Activated CD4-positive, alpha-beta memory T cell treated with anti-CD3 and anti-CD28 coated beads for 36 hours (primary cell): ENCODE measurements at regions of chr2 and their contacts with region 1.

Region 1: GRCh38 chr2:88880441-88880953 is 189.0 kb downstream of the RPIA start:
- DNase-seq: peak; percentile 34
- H3K4me3 Mint-ChIP-seq: no peak overlapping the region
- H3K27ac Mint-ChIP-seq: no peak overlapping the region
- H3K4me1 Mint-ChIP-seq: no peaks in the 10 kb centered on the region
- H3K27me3 Mint-ChIP-seq: peaks cover 14% of the 10 kb centered on the region

Region 2: DNA sequence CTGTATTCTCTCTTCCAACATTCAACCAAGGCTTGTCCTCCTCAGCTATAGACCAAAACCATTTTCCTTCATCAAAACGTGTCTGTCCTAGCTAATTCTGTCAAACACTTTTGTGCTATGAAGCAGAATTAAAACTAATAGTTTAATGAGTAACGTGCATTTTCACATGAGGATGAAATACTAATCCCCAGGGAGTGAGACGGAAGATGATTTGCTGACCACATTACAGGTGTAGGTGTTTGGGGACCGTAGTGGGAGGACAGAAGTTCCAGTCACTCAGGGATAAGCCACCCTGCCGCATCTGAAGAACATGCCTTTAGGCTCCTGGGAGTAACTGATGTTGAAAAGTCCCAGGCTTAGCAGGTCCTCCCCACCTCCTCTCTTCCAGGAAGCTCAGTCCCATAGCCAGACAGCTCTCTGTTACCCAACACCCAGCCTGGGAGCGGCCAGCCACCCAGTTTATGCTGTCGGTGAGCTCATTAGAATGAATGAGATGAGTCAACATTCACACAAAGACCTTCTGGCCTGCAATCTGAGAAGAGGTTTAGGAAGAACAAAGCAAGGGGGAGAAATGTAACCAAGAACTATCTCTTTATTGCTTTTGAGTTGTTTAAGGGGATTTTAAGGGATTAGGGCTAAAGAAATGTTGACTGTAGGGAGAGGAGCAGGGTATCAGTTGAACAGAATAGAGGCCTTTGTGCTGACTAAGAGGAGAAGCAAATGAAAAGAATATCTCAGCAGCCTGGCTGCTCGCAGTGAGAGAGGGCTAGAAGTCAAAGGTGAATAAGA is 550.5 kb before region 1 on chr2:
- CTCF ChIA-PET with region 1: no interaction called
- POLR2A ChIA-PET with region 1: no interaction called
- intact Hi-C with region 1: no loop called
- DNase-seq: no peak
- H3K4me3 Mint-ChIP-seq: no peak overlapping the region
- H3K27ac Mint-ChIP-seq: no peak overlapping the region
- H3K4me1 Mint-ChIP-seq: no peaks in the 10 kb centered on the region
- H3K27me3 Mint-ChIP-seq: peaks cover 17% of the 10 kb centered on the region

Region 3: GRCh38 chr2:88739985-88740600 is 140.4 kb before region 1 on chr2:
- CTCF ChIA-PET with region 1: interaction called, 3 read pairs
- POLR2A ChIA-PET with region 1: no interaction called
- intact Hi-C with region 1: loop called (anchors 5 kb)
- DNase-seq: peak; percentile 80
- H3K4me3 Mint-ChIP-seq: no peak overlapping the region
- H3K27ac Mint-ChIP-seq: no peak overlapping the region
- H3K4me1 Mint-ChIP-seq: peaks cover 18% of the 10 kb centered on the region
- H3K27me3 Mint-ChIP-seq: no peaks in the 10 kb centered on the region

Region 4: DNA sequence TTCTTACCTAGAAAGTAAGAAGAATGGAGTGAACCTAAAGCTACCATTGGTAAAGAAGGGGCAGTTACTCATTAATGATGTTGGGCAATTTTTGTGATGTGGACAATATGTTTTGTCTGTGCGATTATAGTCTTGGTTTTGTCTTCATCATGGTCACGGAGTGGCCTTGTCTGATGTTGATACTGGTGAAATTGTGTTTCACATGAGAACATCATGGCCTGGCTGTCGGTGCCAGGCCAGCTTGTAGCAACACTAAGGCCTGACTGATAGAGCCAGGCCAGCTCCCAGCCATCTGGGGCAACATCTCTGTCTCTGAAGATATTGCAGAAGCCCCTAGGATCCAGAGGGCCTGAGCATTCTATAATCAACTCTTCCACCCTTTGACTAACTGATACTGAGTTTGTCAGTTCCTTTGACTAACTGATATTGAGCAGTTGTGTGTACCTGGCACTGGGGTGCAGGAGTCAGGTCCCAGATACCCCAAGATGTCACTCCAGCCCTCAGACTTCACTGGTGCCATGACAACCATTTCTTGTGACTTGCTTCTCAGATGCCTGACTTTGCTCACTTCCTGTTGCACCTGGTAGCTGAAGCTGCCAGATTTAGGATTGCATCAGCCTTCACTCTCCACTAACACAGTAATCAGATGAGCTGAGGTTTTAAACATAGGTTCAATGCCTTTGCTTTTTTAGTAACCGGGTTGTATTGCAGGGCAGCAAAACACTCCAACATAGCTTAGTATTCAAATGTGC is 126.5 kb before region 1 on chr2:
- CTCF ChIA-PET with region 1: no interaction called
- POLR2A ChIA-PET with region 1: no interaction called
- intact Hi-C with region 1: no loop called
- DNase-seq: peak; percentile 62
- H3K4me3 Mint-ChIP-seq: no peak overlapping the region
- H3K27ac Mint-ChIP-seq: peak overlapping the region; percentile 91
- H3K4me1 Mint-ChIP-seq: peaks cover 24% of the 10 kb centered on the region
- H3K27me3 Mint-ChIP-seq: no peaks in the 10 kb centered on the region

Region 5: DNA sequence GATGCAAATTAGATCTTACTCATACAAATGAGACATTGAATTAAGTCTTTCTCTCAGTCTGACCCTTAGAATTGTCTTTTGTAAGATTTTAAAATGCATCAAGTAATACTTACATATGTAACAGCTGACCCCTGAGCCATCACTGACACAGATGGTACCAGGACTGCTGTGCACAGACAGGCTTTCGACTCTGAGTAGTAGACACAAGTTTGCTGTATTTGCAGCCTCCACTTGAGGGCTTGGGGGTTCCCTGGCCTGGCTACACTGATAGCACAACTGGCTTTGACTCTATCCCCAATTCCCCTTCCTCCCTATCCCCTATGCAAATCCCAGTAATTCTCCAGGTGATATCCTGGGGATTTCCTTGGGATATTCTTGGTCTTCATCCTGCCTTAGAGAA is 11.7 kb after region 1 on chr2:
- CTCF ChIA-PET with region 1: interaction called, 17 read pairs
- POLR2A ChIA-PET with region 1: interaction called, 3 read pairs
- intact Hi-C with region 1: no loop called
- DNase-seq: no peak
- H3K4me3 Mint-ChIP-seq: no peak overlapping the region
- H3K27ac Mint-ChIP-seq: no peak overlapping the region
- H3K4me1 Mint-ChIP-seq: no peaks in the 10 kb centered on the region
- H3K27me3 Mint-ChIP-seq: peaks cover 9% of the 10 kb centered on the region

Region 6: DNA sequence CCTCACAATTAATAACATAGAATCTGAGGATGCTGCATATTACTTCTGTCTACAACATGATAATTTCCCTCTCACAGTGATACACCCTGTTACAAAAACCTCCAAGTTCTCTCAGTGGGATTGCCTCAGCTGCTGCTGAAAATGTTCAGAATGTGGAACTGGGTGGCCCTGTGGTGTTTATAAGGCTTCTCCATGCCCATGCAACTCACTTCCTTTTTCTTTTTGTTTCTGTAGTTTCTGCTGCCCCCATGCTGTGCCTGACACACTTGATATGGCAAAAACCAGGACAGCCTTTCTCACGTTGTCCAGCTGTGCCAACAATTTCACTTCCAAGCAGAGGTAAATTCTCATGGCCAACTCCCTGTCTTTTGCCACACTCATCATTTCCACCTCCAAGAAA is 17.2 kb after region 1 on chr2:
- CTCF ChIA-PET with region 1: interaction called, 17 read pairs
- POLR2A ChIA-PET with region 1: interaction called, 3 read pairs
- intact Hi-C with region 1: no loop called
- DNase-seq: no peak
- H3K4me3 Mint-ChIP-seq: no peak overlapping the region
- H3K27ac Mint-ChIP-seq: no peak overlapping the region
- H3K4me1 Mint-ChIP-seq: no peaks in the 10 kb centered on the region
- H3K27me3 Mint-ChIP-seq: peaks cover 10% of the 10 kb centered on the region

Region 7: GRCh38 chr2:88942798-88943197 is 62.3 kb after region 1 on chr2:
- CTCF ChIA-PET with region 1: interaction called, 7 read pairs
- POLR2A ChIA-PET with region 1: no interaction called
- intact Hi-C with region 1: loop called (anchors 10 kb)
- DNase-seq: no peak
- H3K4me3 Mint-ChIP-seq: no peak overlapping the region
- H3K27ac Mint-ChIP-seq: no peak overlapping the region
- H3K4me1 Mint-ChIP-seq: no peaks in the 10 kb centered on the region
- H3K27me3 Mint-ChIP-seq: peaks cover 2% of the 10 kb centered on the region